GM23248 (cell line): ENCODE measurements at regions of chr9 and their contacts with region 1.

Region 1: DNA sequence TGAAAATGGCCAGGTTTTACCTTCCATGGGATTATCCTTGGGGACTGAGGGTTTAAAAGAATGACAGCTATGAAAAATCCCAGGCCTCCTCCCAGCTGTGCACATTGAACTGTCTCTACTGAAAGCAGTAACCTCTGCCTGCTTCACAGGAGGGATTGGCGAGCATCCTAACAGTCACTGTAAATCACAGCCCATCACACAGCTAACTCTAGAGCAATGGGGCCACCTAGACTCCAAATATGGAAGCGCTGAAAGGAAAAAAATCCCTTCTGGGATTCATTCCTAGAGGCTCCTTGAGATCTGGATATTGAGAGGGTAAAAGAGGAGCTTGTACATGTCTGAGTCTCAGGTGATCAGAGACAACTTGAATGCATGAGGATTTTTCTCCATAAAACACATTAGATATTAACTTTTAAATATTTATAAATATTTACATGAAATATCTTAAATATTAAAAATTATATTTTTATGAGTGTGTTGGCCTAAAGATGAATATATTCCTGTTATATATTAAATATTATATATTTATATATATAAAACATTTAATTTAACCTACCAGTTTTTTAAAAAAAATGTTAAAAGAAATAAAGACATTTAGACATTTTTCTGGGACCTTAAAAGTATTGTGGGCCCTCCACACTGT is 133.8 kb upstream of the SLC24A2 start:
- DNase-seq: peak; percentile 72
- H3K4me3 ChIP-seq: no peak overlapping the region
- H3K27ac ChIP-seq: no peak overlapping the region
- H3K4me1 ChIP-seq: 0 out of 2 replicates have a peak, but pooled peaks cover 3% of the 10 kb centered on the region
- H3K27me3 ChIP-seq: no peaks in the 10 kb centered on the region

Region 2: GRCh38 chr9:19481971-19482404 is 440.6 kb before region 1 on chr9:
- in situ Hi-C with region 1: loop called (anchors 10 kb)
- DNase-seq: no peak
- H3K4me3 ChIP-seq: no peak overlapping the region
- H3K27ac ChIP-seq: no peak overlapping the region
- H3K4me1 ChIP-seq: no peaks in the 10 kb centered on the region
- H3K27me3 ChIP-seq: peaks cover 25% of the 10 kb centered on the region

Region 3: DNA sequence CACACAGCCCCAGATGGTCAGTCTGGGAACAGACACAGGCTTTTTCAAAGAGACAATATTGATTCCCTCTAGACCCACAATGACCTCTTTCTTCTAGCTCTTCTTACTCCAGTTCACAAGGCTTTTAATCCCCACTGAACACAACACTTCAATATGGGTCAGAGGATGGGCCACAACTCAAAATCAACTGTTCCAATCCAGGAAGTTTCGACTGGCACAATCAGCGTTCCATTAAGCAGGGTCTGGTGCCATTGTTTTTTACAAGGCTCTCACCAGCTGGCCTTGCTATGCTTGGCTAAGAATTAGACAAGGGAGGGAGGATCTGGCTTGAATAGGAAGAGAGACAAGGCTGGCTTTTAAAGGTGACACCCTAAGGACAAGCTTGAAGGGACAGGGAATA is 65.7 kb after region 1 on chr9:
- in situ Hi-C with region 1: no loop called
- DNase-seq: no peak
- H3K4me3 ChIP-seq: no peak overlapping the region
- H3K27ac ChIP-seq: no peak overlapping the region
- H3K4me1 ChIP-seq: peaks cover 18% of the 10 kb centered on the region
- H3K27me3 ChIP-seq: no peaks in the 10 kb centered on the region